ENCODE measurements at regions of chr2 and their contacts with region 1.

Region 1: DNA sequence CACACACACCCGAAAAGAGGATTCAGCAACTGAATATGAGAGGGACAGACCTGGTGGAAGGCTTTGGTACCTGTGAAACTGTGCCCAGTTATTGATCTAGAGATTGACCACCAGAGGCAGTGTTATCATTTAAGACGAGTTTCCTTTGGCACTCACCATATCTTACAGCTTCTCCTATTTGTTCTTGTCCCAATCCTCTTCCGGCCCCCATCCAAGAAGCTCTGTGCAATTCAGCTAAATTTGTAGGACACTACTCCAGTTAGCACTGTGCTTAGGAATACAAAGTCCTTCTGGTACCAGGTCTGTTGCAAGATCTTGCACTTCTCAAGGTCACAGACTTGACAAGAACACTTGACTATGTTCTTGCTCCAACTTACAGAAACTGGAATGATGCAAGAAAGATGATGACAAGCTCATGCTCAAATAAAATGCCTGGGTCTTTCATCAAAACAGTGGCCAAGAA is 177.7 kb downstream of the TMEM247 start:
- DNase-seq: peak; percentile 39
- H3K4me3 ChIP-seq: no peak overlapping the region
- H3K27ac ChIP-seq: no peak overlapping the region
- H3K4me1 ChIP-seq: no peaks in the 10 kb centered on the region
- H3K27me3 ChIP-seq: no peaks in the 10 kb centered on the region
- CTCF ChIP-seq: peak; percentile 59

Region 2: GRCh38 chr2:46776687-46777327 is 119.7 kb after region 1 on chr2:
- CTCF ChIA-PET with region 1: interaction called, 3 read pairs
- POLR2A ChIA-PET with region 1: no interaction called
- intact Hi-C with region 1: loop called (anchors 5 kb)
- DNase-seq: peak; percentile 76
- H3K4me3 ChIP-seq: no peak overlapping the region
- H3K27ac ChIP-seq: no peak overlapping the region
- H3K4me1 ChIP-seq: no peaks in the 10 kb centered on the region
- H3K27me3 ChIP-seq: no peaks in the 10 kb centered on the region
- CTCF ChIP-seq: peak; percentile 89

Measured in A673 (cell line).